IMR-90 (cell line): ENCODE measurements at regions of chr17 and their contacts with region 1.

Region 1: DNA sequence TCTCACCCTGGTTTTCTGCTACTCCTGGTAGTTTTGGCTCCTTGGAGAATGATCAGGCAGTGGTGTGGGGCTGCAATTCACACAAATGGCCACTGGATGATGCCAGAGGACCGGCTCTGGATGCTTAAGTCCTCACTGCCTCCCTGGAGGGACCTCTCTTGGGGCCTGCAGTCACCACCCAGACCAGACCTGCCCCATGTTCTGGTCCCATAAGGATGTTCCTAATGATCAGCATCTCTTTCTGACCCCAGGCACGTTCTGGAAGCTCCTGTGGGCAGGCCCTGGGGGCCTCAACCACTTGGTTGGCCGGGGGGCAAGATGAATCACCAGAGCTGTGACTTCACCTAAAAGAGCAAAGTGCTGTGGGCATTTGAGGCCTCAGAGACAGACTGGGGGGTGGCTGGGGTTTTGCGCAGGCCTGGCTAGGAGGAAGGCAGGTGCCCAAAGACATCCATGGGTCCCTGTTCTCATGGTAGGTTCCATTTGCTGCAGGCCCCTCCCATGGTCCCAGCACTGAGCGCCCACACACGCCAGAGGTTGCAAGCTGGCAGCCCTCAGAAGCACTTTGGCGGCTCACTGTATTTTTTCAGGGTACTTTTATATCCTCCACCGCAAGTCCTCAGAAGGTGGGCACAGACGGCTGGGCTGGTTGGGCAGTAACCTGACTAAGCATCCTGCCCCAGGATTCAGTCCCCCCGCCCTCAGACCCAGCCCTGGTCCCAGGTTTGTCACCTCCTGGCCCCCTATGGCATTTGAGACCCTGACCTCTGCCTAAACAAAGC is 53.2 kb downstream of the NT5M start:
- DNase-seq: peak; percentile 85
- ATAC-seq: peak; percentile 98
- H3K4me3 ChIP-seq: no peak overlapping the region
- H3K27ac ChIP-seq: no peak overlapping the region
- H3K4me1 ChIP-seq: peaks cover 2% of the 10 kb centered on the region; the same call in 1 of the 2 replicates
- H3K27me3 ChIP-seq: no peaks in the 10 kb centered on the region; the same call in 1 of the 2 replicates
- CTCF ChIP-seq: peak; percentile 99
- POLR2A ChIP-seq: peak; percentile 70; the same call in 1 of the 2 replicates
- RAD21 ChIP-seq: peak; percentile 100

Region 2: GRCh38 chr17:17313350-17313991 is 42.9 kb before region 1 on chr17:
- CTCF ChIA-PET with region 1: no interaction called
- POLR2A ChIA-PET with region 1: no interaction called
- dilution Hi-C with region 1: no loop called
- in situ Hi-C with region 1: no loop called
- intact Hi-C with region 1: no loop called
- DNase-seq: no peak
- ATAC-seq: no peak
- H3K4me3 ChIP-seq: no peak overlapping the region
- H3K27ac ChIP-seq: no peak overlapping the region
- H3K4me1 ChIP-seq: no peaks in the 10 kb centered on the region
- H3K27me3 ChIP-seq: no peaks in the 10 kb centered on the region
- CTCF ChIP-seq: peak; percentile 34
- POLR2A ChIP-seq: no peak
- RAD21 ChIP-seq: peak; percentile 50

Region 3: GRCh38 chr17:17344462-17345293 is 11.7 kb before region 1 on chr17:
- CTCF ChIA-PET with region 1: no interaction called
- POLR2A ChIA-PET with region 1: no interaction called
- dilution Hi-C with region 1: no loop called
- in situ Hi-C with region 1: no loop called
- intact Hi-C with region 1: no loop called
- DNase-seq: no peak
- ATAC-seq: no peak
- H3K4me3 ChIP-seq: no peak overlapping the region
- H3K27ac ChIP-seq: no peak overlapping the region
- H3K4me1 ChIP-seq: peaks cover 2% of the 10 kb centered on the region; the same call in 1 of the 2 replicates
- H3K27me3 ChIP-seq: peaks cover 18% of the 10 kb centered on the region; the same call in 1 of the 2 replicates
- CTCF ChIP-seq: no peak
- POLR2A ChIP-seq: no peak
- RAD21 ChIP-seq: no peak

Region 4: DNA sequence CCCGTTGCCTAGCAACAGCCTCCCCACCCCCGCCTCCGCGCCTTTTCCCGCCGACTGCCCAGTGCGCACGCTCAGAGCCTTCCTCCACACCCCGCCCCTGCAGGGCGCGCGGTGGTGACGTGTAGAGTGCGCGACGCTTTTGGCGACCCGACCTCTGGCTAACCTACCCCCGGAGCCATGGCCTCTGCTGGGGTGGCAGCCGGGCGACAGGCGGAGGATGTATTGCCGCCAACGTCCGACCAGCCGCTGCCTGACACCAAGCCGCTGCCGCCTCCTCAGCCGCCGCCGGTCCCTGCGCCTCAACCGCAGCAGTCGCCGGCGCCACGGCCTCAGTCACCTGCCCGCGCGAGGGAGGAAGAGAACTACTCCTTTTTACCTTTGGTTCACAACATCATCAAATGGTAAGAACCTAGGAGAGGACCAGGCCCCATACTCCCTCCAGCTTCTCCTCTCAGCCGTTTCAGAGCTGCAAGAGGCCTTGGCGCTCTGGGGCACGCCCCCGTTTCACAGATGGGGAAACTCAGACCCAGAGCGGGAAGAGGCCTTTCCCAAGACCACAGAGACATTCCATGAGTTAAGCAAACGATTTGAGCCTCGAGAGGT is 120.6 kb after region 1 on chr17 and contains the start of gene MED9:
- CTCF ChIA-PET with region 1: no interaction called
- POLR2A ChIA-PET with region 1: no interaction called
- dilution Hi-C with region 1: no loop called
- in situ Hi-C with region 1: no loop called
- intact Hi-C with region 1: loop called (anchors 1 kb)
- DNase-seq: peak; percentile 85
- ATAC-seq: peak; percentile 99
- H3K4me3 ChIP-seq: peak within 1 kb of the TSS; percentile 99
- H3K27ac ChIP-seq: peak within 1 kb of the TSS; percentile 90
- H3K4me1 ChIP-seq: no peaks in the 10 kb centered on the region; the same call in 1 of the 2 replicates
- H3K27me3 ChIP-seq: peaks cover 20% of the 10 kb centered on the region
- CTCF ChIP-seq: no peak
- POLR2A ChIP-seq: peak; percentile 49; the same call in 1 of the 2 replicates
- RAD21 ChIP-seq: no peak
- total RNA-seq, gene MED9: 6.1 and 8.9 TPM in 2 replicates

Region 5: GRCh38 chr17:17568749-17569195 is 212.4 kb after region 1 on chr17:
- CTCF ChIA-PET with region 1: interaction called, 3 read pairs
- POLR2A ChIA-PET with region 1: no interaction called
- dilution Hi-C with region 1: no loop called
- in situ Hi-C with region 1: loop called (anchors 5 kb)
- intact Hi-C with region 1: loop called (anchors 1 kb)
- DNase-seq: peak; percentile 36
- ATAC-seq: peak; percentile 62
- H3K4me3 ChIP-seq: no peak overlapping the region
- H3K27ac ChIP-seq: no peak overlapping the region
- H3K4me1 ChIP-seq: peaks cover 2% of the 10 kb centered on the region; the same call in 1 of the 2 replicates
- H3K27me3 ChIP-seq: no peaks in the 10 kb centered on the region
- CTCF ChIP-seq: peak; percentile 74
- POLR2A ChIP-seq: no peak
- RAD21 ChIP-seq: peak; percentile 83

Region 6: GRCh38 chr17:17603178-17603894 is 247.0 kb after region 1 on chr17:
- CTCF ChIA-PET with region 1: no interaction called
- POLR2A ChIA-PET with region 1: no interaction called
- dilution Hi-C with region 1: no loop called
- in situ Hi-C with region 1: no loop called
- intact Hi-C with region 1: no loop called
- DNase-seq: no peak
- ATAC-seq: no peak
- H3K4me3 ChIP-seq: no peak overlapping the region
- H3K27ac ChIP-seq: no peak overlapping the region
- H3K4me1 ChIP-seq: peaks cover 4% of the 10 kb centered on the region
- H3K27me3 ChIP-seq: peaks cover 7% of the 10 kb centered on the region; the same call in 1 of the 2 replicates
- CTCF ChIP-seq: no peak
- POLR2A ChIP-seq: no peak
- RAD21 ChIP-seq: no peak

Region 7: GRCh38 chr17:17641621-17642409 is 285.5 kb after region 1 on chr17:
- CTCF ChIA-PET with region 1: interaction called, 16 read pairs
- POLR2A ChIA-PET with region 1: no interaction called
- dilution Hi-C with region 1: no loop called
- in situ Hi-C with region 1: loop called (anchors 5 kb)
- intact Hi-C with region 1: loop called (anchors 1 kb)
- DNase-seq: peak; percentile 76
- ATAC-seq: peak; percentile 99
- H3K4me3 ChIP-seq: no peak overlapping the region
- H3K27ac ChIP-seq: no peak overlapping the region
- H3K4me1 ChIP-seq: no peaks in the 10 kb centered on the region
- H3K27me3 ChIP-seq: peaks cover 6% of the 10 kb centered on the region
- CTCF ChIP-seq: peak; percentile 96
- POLR2A ChIP-seq: no peak
- RAD21 ChIP-seq: peak; percentile 96

Region 8: GRCh38 chr17:17890773-17891759 is 534.7 kb after region 1 on chr17:
- CTCF ChIA-PET with region 1: no interaction called
- POLR2A ChIA-PET with region 1: no interaction called
- dilution Hi-C with region 1: no loop called
- in situ Hi-C with region 1: loop called (anchors 25 kb)
- intact Hi-C with region 1: no loop called
- DNase-seq: peak; percentile 72
- ATAC-seq: peak; percentile 95
- H3K4me3 ChIP-seq: no peak overlapping the region
- H3K27ac ChIP-seq: no peak overlapping the region
- H3K4me1 ChIP-seq: peaks cover 4% of the 10 kb centered on the region; the same call in 1 of the 2 replicates
- H3K27me3 ChIP-seq: no peaks in the 10 kb centered on the region
- CTCF ChIP-seq: peak; percentile 83
- POLR2A ChIP-seq: no peak
- RAD21 ChIP-seq: peak; percentile 94